ENCODE measurements at regions of chr11 and their contacts with region 1.

Region 1: GRCh38 chr11:73760679-73761402 is at the start of gene RAB6A:
- DNase-seq: peak; percentile 100
- H3K4me3 Mint-ChIP-seq: peak within 1 kb of the TSS; percentile 94
- H3K27ac Mint-ChIP-seq: peak within 1 kb of the TSS; percentile 86
- H3K4me1 Mint-ChIP-seq: peaks cover 32% of the 10 kb centered on the region
- H3K27me3 Mint-ChIP-seq: peaks cover 3% of the 10 kb centered on the region
- total RNA-seq, gene RAB6A: 104 to 108 TPM

Region 2: DNA sequence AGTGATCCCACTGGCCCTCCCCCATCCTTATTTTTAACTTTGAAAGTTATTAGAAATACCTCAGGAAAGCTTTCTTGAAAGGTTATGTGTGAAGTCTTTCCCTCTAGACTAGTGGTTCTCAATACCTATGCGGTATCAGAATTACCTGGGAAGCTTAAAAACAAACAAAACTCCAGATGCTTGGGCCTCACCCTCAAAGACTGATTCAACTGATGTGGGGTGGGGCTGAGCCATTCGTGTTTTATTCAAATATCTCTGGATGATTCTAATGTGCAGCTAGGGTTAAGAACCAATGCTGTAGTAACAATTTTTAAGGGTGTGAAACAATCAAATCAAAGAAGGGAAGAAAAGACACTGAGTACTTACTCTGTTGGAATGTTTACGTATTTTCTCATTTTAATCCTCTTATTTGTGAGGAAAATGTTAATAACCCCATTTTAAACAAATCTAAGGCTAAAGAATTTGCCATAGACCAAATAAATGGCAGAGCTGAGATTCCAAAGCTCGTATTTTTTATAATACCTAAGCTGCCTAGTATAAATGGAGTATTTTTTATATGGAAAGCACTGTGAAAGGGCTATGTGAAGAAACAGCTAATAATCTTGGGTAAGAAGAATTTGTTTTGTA is 66.8 kb before region 1 on chr11:
- CTCF ChIA-PET with region 1: no interaction called
- POLR2A ChIA-PET with region 1: no interaction called
- DNase-seq: no peak
- H3K4me3 Mint-ChIP-seq: no peak overlapping the region
- H3K27ac Mint-ChIP-seq: no peak overlapping the region
- H3K4me1 Mint-ChIP-seq: no peaks in the 10 kb centered on the region
- H3K27me3 Mint-ChIP-seq: no peaks in the 10 kb centered on the region

Region 3: GRCh38 chr11:73779084-73779902 is 18.5 kb after region 1 on chr11:
- CTCF ChIA-PET with region 1: interaction called, 62 read pairs
- POLR2A ChIA-PET with region 1: interaction called, 158 read pairs
- DNase-seq: peak; percentile 99
- H3K4me3 Mint-ChIP-seq: peak overlapping the region; percentile 81
- H3K27ac Mint-ChIP-seq: peak overlapping the region; percentile 99
- H3K4me1 Mint-ChIP-seq: peaks cover 23% of the 10 kb centered on the region
- H3K27me3 Mint-ChIP-seq: no peaks in the 10 kb centered on the region

Region 4: GRCh38 chr11:73787643-73788537 is 27.0 kb after region 1 on chr11 and contains the start of gene MRPL48:
- CTCF ChIA-PET with region 1: interaction called, 7 read pairs
- POLR2A ChIA-PET with region 1: interaction called, 29 read pairs
- DNase-seq: peak; percentile 90
- H3K4me3 Mint-ChIP-seq: peak within 1 kb of the TSS; percentile 94
- H3K27ac Mint-ChIP-seq: peak within 1 kb of the TSS; percentile 86
- H3K4me1 Mint-ChIP-seq: peaks cover 38% of the 10 kb centered on the region
- H3K27me3 Mint-ChIP-seq: no peaks in the 10 kb centered on the region
- total RNA-seq, gene MRPL48: 35.9 to 45.5 TPM

Region 5: DNA sequence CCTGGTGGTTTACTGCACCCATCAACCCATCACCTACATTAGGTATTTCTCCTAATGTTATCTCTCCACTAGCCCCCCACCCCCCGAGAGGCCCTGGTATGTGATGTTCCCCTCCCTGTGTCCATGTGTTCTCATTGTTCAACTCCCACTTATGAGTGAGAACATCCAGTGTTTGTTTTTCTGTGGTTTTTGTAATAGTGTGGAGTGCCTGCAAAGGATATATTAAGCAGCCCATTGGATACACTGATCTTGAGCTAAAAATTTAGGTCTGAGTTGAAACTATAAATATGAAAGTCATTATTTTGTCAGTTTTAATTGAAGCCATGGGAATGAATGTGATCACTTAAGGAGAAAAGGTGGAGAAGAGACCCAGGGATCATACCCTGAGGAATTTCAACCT is 49.8 kb after region 1 on chr11:
- CTCF ChIA-PET with region 1: no interaction called
- POLR2A ChIA-PET with region 1: no interaction called
- DNase-seq: no peak
- H3K4me3 Mint-ChIP-seq: no peak overlapping the region
- H3K27ac Mint-ChIP-seq: no peak overlapping the region
- H3K4me1 Mint-ChIP-seq: no peaks in the 10 kb centered on the region
- H3K27me3 Mint-ChIP-seq: no peaks in the 10 kb centered on the region

Region 6: DNA sequence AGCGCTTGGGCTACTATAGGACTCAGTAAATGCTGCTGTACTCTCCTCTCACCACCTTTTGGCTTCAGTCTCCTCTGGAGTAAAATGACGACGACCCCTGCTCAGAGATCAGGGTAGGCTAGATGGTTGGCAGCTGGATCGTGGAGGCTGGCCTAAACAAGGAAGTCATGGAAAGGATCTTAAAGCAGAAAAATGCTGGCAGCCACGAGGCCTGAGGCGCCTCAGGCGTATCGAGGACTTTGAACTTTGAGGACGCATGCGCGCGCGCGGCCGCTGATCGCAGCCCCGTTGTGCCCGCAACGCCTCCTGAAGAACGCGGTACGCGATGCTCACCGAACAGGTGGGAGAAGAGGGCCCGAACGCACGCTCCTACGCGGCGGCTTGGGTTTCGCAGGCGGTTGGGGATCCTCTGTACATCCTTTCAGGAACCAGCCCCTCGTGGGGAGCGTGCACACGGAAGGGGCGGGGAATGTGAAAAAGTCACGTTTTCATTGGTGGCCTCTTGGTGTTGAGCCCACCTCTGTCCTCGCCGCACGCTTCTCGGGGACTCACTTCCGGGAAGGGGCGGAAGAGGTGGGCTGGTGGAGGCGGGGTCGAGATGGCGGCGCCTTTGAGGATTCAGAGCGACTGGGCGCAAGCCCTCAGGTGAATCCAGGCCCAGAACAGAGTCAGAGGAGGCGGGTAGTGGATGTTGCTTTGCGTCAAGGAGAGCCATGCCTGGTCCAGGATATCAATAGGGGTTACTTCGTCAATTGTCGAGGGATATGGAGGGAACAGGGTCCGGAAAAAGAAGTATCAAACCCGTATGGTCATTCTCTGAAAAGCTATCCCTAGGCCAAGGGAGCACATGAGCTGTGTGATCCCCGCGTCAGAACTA is 115.8 kb after region 1 on chr11 and contains the starts of genes COA4 and PAAF1:
- CTCF ChIA-PET with region 1: interaction called, 3 read pairs
- POLR2A ChIA-PET with region 1: interaction called, 12 read pairs
- DNase-seq: peak; percentile 95
- H3K4me3 Mint-ChIP-seq: peak within 1 kb of the TSS; percentile 90
- H3K27ac Mint-ChIP-seq: peak within 1 kb of the TSS; percentile 88
- H3K4me1 Mint-ChIP-seq: peaks cover 38% of the 10 kb centered on the region
- H3K27me3 Mint-ChIP-seq: no peaks in the 10 kb centered on the region
- total RNA-seq, gene COA4: 49.8 to 51.5 TPM
- total RNA-seq, gene PAAF1: 21.6 TPM

Measured in activated CD4-positive, alpha-beta memory T cell treated with anti-CD3 and anti-CD28 coated beads, Interleukin-2, amount 10 ng/mL, durations not matched to agents 7 days and 5 days (primary cell).